CD8-positive, alpha-beta T cell (primary cell): ENCODE measurements at regions of chr2 and their contacts with region 1.

Region 1: DNA sequence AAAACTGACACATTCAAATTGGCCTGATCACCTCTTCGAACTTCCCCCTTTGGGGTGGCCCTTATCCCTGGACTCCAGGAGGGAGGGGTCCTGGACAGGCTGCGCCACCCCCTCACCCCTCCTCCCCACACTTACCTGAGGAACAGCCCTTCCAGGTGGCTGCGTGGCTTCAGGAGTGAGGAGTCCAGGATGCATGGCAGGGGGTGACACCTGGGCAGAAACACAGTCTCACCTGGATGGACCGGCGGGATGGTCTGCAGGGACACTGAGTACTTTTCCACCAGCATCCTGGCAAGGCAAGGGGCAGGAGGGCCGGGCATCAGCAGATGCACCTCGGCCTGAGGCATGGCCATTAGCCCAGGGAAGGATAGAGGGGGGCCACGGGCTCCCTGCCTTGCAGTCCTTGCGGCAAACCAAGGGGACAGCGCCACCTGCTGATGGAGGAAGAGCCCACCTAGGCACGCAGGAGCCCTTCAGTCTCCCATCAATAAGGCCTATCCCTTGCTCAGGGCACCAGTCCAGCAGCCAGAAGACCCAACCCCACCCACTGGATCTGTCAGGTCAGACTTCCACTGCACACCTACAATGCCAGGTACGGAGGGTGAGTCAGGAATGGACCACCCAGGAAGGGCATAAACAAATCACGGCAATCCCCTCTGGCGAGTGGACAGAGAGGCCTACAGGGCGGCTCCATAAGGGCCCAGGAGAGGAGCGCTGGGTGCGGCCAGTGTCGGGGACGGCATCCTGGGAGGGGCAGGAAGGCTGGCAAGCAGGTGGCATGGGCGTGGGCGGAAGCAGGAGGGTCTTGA is 26.0 kb downstream of the FAM178B start:
- DNase-seq: peak; percentile 68 to 93 (median 88)
- ATAC-seq: peak; percentile 22
- H3K4me3 ChIP-seq: no peak overlapping the region
- H3K4me3 Mint-ChIP-seq: peak overlapping the region; percentile 32
- H3K27ac ChIP-seq: no peak overlapping the region
- H3K27ac Mint-ChIP-seq: peak overlapping the region; percentile 71
- H3K4me1 ChIP-seq: peaks cover 47% of the 10 kb centered on the region
- H3K4me1 Mint-ChIP-seq: peaks cover 52% of the 10 kb centered on the region
- H3K27me3 ChIP-seq: no peaks in the 10 kb centered on the region
- H3K27me3 Mint-ChIP-seq: no peaks in the 10 kb centered on the region
- CTCF ChIP-seq: peak; percentile 77

Region 2: GRCh38 chr2:96536445-96537065 is 423.8 kb before region 1 on chr2 and contains the start of gene ARID5A:
- CTCF ChIA-PET with region 1: interaction called, 3 read pairs
- POLR2A ChIA-PET with region 1: no interaction called
- intact Hi-C with region 1: loop called (anchors 5 kb)
- DNase-seq: peak; percentile 84 to 95 (median 92)
- ATAC-seq: peak; percentile 48
- H3K4me3 ChIP-seq: peak within 1 kb of the TSS; percentile 81
- H3K4me3 Mint-ChIP-seq: peak within 1 kb of the TSS; percentile 98
- H3K27ac ChIP-seq: peak within 1 kb of the TSS; percentile 93 to 97
- H3K27ac Mint-ChIP-seq: peak within 1 kb of the TSS; percentile 100
- H3K4me1 ChIP-seq: peaks cover 43% of the 10 kb centered on the region
- H3K4me1 Mint-ChIP-seq: peaks cover 43% of the 10 kb centered on the region
- H3K27me3 ChIP-seq: no peaks in the 10 kb centered on the region
- H3K27me3 Mint-ChIP-seq: no peaks in the 10 kb centered on the region
- CTCF ChIP-seq: peak; percentile 48
- total RNA-seq, gene ARID5A: 408 to 413 TPM

Region 3: GRCh38 chr2:96739633-96740428 is 220.5 kb before region 1 on chr2 and contains the start of gene LMAN2L:
- CTCF ChIA-PET with region 1: no interaction called
- POLR2A ChIA-PET with region 1: no interaction called
- intact Hi-C with region 1: loop called (anchors 2 kb)
- DNase-seq: peak; percentile 92 to 99 (median 96)
- ATAC-seq: peak; percentile 98
- H3K4me3 ChIP-seq: peak within 1 kb of the TSS; percentile 60 to 98
- H3K4me3 Mint-ChIP-seq: peak within 1 kb of the TSS; percentile 97
- H3K27ac ChIP-seq: peak within 1 kb of the TSS; percentile 46 to 73
- H3K27ac Mint-ChIP-seq: peak within 1 kb of the TSS; percentile 91
- H3K4me1 ChIP-seq: peaks cover 13% of the 10 kb centered on the region
- H3K4me1 Mint-ChIP-seq: peaks cover 38% of the 10 kb centered on the region
- H3K27me3 ChIP-seq: no peaks in the 10 kb centered on the region
- H3K27me3 Mint-ChIP-seq: no peaks in the 10 kb centered on the region
- CTCF ChIP-seq: no peak
- total RNA-seq, gene LMAN2L: 1.1 to 1.7 TPM

Region 4: GRCh38 chr2:96839293-96839874 is 121.0 kb before region 1 on chr2:
- CTCF ChIA-PET with region 1: interaction called, 4 read pairs
- POLR2A ChIA-PET with region 1: interaction called, 13 read pairs
- intact Hi-C with region 1: no loop called
- DNase-seq: peak; percentile 65 to 92 (median 86)
- ATAC-seq: peak; percentile 97
- H3K4me3 ChIP-seq: peak overlapping the region; percentile 35 to 40
- H3K4me3 Mint-ChIP-seq: peak overlapping the region; percentile 70
- H3K27ac ChIP-seq: peak overlapping the region in 1 of 2 experiments; percentile 42
- H3K27ac Mint-ChIP-seq: peak overlapping the region; percentile 62
- H3K4me1 ChIP-seq: peaks cover 26% of the 10 kb centered on the region
- H3K4me1 Mint-ChIP-seq: peaks cover 18% of the 10 kb centered on the region
- H3K27me3 ChIP-seq: no peaks in the 10 kb centered on the region
- H3K27me3 Mint-ChIP-seq: no peaks in the 10 kb centered on the region
- CTCF ChIP-seq: no peak

Region 5: GRCh38 chr2:96913398-96914202 is 46.8 kb before region 1 on chr2:
- CTCF ChIA-PET with region 1: interaction called, 3 read pairs
- POLR2A ChIA-PET with region 1: no interaction called
- intact Hi-C with region 1: loop called in 1 of 2 experiments (anchors 1 kb)
- DNase-seq: peak in 8 of 9 experiments; percentile 46 to 81 (median 65)
- ATAC-seq: peak; percentile 78
- H3K4me3 ChIP-seq: peak overlapping the region; percentile 40 to 42
- H3K4me3 Mint-ChIP-seq: peak overlapping the region; percentile 82
- H3K27ac ChIP-seq: peak overlapping the region; percentile 32 to 75
- H3K27ac Mint-ChIP-seq: peak overlapping the region; percentile 94
- H3K4me1 ChIP-seq: peaks cover 53% of the 10 kb centered on the region
- H3K4me1 Mint-ChIP-seq: peaks cover 75% of the 10 kb centered on the region
- H3K27me3 ChIP-seq: no peaks in the 10 kb centered on the region
- H3K27me3 Mint-ChIP-seq: no peaks in the 10 kb centered on the region
- CTCF ChIP-seq: no peak

Region 6: GRCh38 chr2:97011977-97012565 is 51.7 kb after region 1 on chr2:
- CTCF ChIA-PET with region 1: interaction called, 3 read pairs
- POLR2A ChIA-PET with region 1: no interaction called
- intact Hi-C with region 1: loop called in 1 of 2 experiments (anchors 2 kb)
- DNase-seq: peak in 4 of 9 experiments; percentile 9 to 74 (median 42)
- ATAC-seq: peak; percentile 36
- H3K4me3 ChIP-seq: no peak overlapping the region
- H3K4me3 Mint-ChIP-seq: no peak overlapping the region
- H3K27ac ChIP-seq: no peak overlapping the region
- H3K27ac Mint-ChIP-seq: no peak overlapping the region
- H3K4me1 ChIP-seq: no peaks in the 10 kb centered on the region
- H3K4me1 Mint-ChIP-seq: no peaks in the 10 kb centered on the region
- H3K27me3 ChIP-seq: peaks cover 0 to 2% of the 10 kb centered on the region in 2 experiments
- H3K27me3 Mint-ChIP-seq: peaks cover 11% of the 10 kb centered on the region
- CTCF ChIP-seq: peak; percentile 49